ENCODE measurements at regions of chr6 and their contacts with region 1.

Region 1: GRCh38 chr6:136244061-136244616 is 6.0 kb downstream of the MTFR2 start:
- DNase-seq: peak; percentile 37
- H3K4me3 ChIP-seq: no peak overlapping the region
- H3K27ac ChIP-seq: no peak overlapping the region
- H3K27me3 ChIP-seq: no peaks in the 10 kb centered on the region
- CTCF ChIP-seq: no peak

Region 2: GRCh38 chr6:135451693-135452092 is 792.4 kb before region 1 on chr6:
- CTCF ChIA-PET with region 1: interaction called, 12 read pairs
- POLR2A ChIA-PET with region 1: no interaction called
- DNase-seq: no peak
- H3K4me3 ChIP-seq: no peak overlapping the region
- H3K27ac ChIP-seq: no peak overlapping the region
- H3K27me3 ChIP-seq: no peaks in the 10 kb centered on the region
- CTCF ChIP-seq: peak; percentile 63

Region 3: DNA sequence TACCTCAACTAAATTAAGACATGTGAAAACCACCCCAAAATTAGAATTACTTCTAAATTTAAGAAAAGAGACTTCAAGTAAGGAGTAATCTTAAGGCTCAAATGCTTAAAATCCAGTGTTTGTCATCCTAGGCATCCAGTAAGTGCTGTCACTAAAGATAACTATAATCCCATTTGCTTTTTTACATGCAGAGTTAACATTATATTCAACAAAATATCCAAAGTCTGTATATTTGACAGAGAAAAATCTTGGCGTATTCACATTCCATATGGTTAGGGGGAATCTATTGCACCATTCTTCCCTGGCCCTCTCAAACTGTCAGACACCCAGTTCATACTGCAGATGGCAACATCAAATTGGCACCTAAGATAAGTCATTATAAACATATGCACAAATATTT is 11.4 kb before region 1 on chr6:
- CTCF ChIA-PET with region 1: no interaction called
- POLR2A ChIA-PET with region 1: no interaction called
- DNase-seq: no peak
- H3K4me3 ChIP-seq: no peak overlapping the region
- H3K27ac ChIP-seq: no peak overlapping the region
- H3K27me3 ChIP-seq: no peaks in the 10 kb centered on the region
- CTCF ChIP-seq: no peak